Prostate gland (tissue), 2 donors: ENCODE measurements at regions of chr2 and their contacts with region 1.

Region 1: DNA sequence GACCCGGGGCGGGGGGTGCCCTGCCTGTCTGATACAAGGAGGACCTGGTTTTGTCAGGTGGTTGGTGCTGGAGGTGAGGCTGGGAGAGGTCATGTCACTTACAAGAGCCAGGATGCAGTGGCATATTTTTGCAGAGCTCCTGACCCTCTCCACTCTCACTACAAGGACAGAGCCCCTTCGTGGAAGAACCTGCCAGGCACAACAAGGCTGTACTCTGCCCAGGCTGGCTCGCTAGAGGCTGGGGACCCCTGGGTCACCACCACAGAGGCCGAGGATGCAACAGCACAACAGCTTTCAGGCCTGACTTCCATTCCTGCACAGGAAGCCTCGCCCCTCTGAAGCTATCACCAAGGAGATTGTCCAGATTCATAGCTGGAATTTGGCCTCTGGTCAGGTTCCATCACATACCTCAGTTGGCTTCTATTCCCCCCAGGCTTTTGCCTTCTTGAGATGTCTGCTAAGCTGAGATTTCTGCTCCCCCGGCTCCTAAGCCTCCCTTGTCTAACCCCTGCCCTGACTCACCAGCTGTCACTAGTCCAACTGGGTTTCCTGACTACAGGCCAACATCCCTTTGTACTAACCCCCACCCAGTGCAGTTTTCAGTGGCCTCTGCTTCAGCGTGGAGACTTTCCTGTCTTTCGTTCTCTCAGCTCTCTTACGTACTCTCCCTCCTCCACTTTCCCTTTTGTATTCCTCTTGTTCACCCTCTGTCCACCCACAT is 132.5 kb upstream of the EPAS1 start:
- DNase-seq: no peak
- H3K4me3 ChIP-seq: no peak overlapping the region
- H3K27ac ChIP-seq: peak overlapping the region in 1 of 2 donors; percentile 10
- H3K4me1 ChIP-seq: no peaks in the 10 kb centered on the region
- H3K27me3 ChIP-seq: no peaks in the 10 kb centered on the region
- CTCF ChIP-seq: no peak
- POLR2A ChIP-seq: no peak

Region 2: GRCh38 chr2:45833968-45834344 is 330.8 kb before region 1 on chr2:
- intact Hi-C with region 1: loop called (anchors 10 kb)
- DNase-seq: no peak
- H3K4me3 ChIP-seq: no peak overlapping the region
- H3K27ac ChIP-seq: no peak overlapping the region
- H3K4me1 ChIP-seq: no peaks in the 10 kb centered on the region
- H3K27me3 ChIP-seq: no peaks in the 10 kb centered on the region
- CTCF ChIP-seq: no peak
- POLR2A ChIP-seq: no peak

Region 3: GRCh38 chr2:46010925-46011490 is 153.7 kb before region 1 on chr2:
- intact Hi-C with region 1: no loop called
- DNase-seq: no peak
- H3K4me3 ChIP-seq: no peak overlapping the region
- H3K27ac ChIP-seq: no peak overlapping the region
- H3K4me1 ChIP-seq: no peaks in the 10 kb centered on the region
- H3K27me3 ChIP-seq: no peaks in the 10 kb centered on the region
- CTCF ChIP-seq: peak; percentile 53 to 91 (median 78)
- POLR2A ChIP-seq: no peak

Region 4: DNA sequence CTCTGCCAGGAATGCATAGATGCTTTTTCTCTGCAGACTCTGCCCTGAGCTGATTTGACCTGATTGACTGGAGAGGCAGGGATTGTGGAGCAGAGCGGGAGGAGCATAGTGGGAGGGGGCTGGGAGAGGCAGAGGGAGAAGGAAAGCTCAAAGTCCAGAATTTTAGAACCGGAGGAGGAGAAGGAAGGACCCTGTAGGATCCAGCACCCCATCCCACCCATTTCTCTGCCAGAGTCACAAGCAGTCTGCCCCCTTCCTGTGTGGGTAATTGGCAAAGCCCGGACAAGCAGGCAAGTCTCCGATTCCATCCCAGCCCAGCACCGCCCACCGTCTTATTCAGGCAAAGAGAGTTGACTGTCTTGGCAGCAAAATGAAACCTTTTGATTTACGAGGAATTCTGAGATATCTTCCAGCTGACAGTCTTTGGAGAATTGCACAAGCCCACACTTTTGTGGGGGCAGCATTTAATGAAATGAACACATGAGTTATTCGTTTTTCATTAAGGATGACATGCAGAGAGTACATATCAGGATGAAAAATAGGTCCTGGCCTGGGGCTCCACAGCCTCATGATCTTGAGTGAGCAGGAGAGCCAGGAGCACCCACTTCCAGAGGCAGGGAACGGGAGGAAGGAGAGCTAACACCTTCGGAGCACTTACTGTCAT is 647.8 kb after region 1 on chr2:
- intact Hi-C with region 1: no loop called
- DNase-seq: peak; percentile 36
- H3K4me3 ChIP-seq: no peak overlapping the region
- H3K27ac ChIP-seq: peak overlapping the region; percentile 44 to 71
- H3K4me1 ChIP-seq: peaks cover 10% of the 10 kb centered on the region
- H3K27me3 ChIP-seq: no peaks in the 10 kb centered on the region
- CTCF ChIP-seq: no peak
- POLR2A ChIP-seq: no peak